ENCODE measurements at regions of chr10 and their contacts with region 1.

Region 1: GRCh38 chr10:3948843-3949242 is 163.8 kb upstream of the KLF6 start:
- DNase-seq: peak; percentile 92
- ATAC-seq: peak; percentile 80
- H3K4me3 Mint-ChIP-seq: peak overlapping the region; percentile 79
- H3K27ac Mint-ChIP-seq: peak overlapping the region; percentile 97
- H3K4me1 Mint-ChIP-seq: peaks cover 88% of the 10 kb centered on the region
- H3K27me3 Mint-ChIP-seq: no peaks in the 10 kb centered on the region

Region 2: DNA sequence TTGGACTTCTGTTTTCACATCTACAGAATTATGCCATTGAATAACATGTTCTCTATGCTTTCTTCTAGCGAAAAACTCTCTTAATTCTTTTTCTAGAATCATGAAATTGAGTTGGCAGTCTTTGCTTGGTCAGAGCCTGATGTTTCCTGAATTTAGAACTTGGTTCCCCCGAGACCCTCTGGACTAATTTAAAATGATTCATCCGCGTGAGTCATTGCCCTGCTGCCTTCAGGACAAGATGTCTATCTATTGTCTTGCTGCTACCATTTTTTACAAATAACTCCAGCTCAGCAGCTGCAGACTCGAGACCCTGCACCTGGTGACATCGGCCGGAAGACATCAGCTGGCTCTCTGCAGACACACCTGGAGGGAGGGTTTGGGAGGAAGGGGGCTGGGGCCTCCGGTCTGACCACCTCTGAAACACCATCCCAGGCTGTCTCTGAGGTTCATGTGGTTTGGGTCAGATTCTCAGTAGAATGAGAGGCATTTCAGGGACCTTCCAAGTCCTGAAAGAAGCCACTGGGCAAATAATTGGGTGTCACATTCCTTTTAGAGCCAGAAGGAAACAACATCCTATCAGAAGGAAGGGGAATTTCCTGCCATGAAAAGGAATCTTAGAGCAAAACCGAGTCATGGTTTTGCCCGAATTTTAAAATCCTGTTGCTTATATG is 142.9 kb before region 1 on chr10:
- CTCF ChIA-PET with region 1: no interaction called
- POLR2A ChIA-PET with region 1: interaction called, 12 read pairs
- DNase-seq: peak; percentile 62
- ATAC-seq: peak; percentile 6
- H3K4me3 Mint-ChIP-seq: peak overlapping the region; percentile 53
- H3K27ac Mint-ChIP-seq: peak overlapping the region; percentile 98
- H3K4me1 Mint-ChIP-seq: peaks cover 56% of the 10 kb centered on the region
- H3K27me3 Mint-ChIP-seq: no peaks in the 10 kb centered on the region

Region 3: GRCh38 chr10:3972460-3973301 is 23.8 kb after region 1 on chr10:
- CTCF ChIA-PET with region 1: interaction called, 8 read pairs
- POLR2A ChIA-PET with region 1: interaction called, 20 read pairs
- DNase-seq: peak; percentile 63
- ATAC-seq: peak; percentile 88
- H3K4me3 Mint-ChIP-seq: peak overlapping the region; percentile 76
- H3K27ac Mint-ChIP-seq: peak overlapping the region; percentile 99
- H3K4me1 Mint-ChIP-seq: peaks cover 61% of the 10 kb centered on the region
- H3K27me3 Mint-ChIP-seq: no peaks in the 10 kb centered on the region